ENCODE measurements at regions of chr3 and their contacts with region 1.

Region 1: GRCh38 chr3:908839-909238 is 184.0 kb upstream of the CNTN6 start:
- DNase-seq: no peak
- H3K4me3 ChIP-seq: no peak overlapping the region
- H3K27ac ChIP-seq: no peak overlapping the region
- H3K4me1 ChIP-seq: no peaks in the 10 kb centered on the region
- H3K27me3 ChIP-seq: no peaks in the 10 kb centered on the region
- CTCF ChIP-seq: peak; percentile 16 to 47

Region 2: GRCh38 chr3:952906-953305 is 44.1 kb after region 1 on chr3:
- CTCF ChIA-PET with region 1: no interaction called
- dilution Hi-C with region 1: no loop called
- in situ Hi-C with region 1: no loop called
- intact Hi-C with region 1: no loop called
- DNase-seq: no peak
- H3K4me3 ChIP-seq: no peak overlapping the region
- H3K27ac ChIP-seq: no peak overlapping the region
- H3K4me1 ChIP-seq: no peaks in the 10 kb centered on the region
- H3K27me3 ChIP-seq: no peaks in the 10 kb centered on the region
- CTCF ChIP-seq: no peak

Region 3: GRCh38 chr3:976021-976420 is 67.2 kb after region 1 on chr3:
- CTCF ChIA-PET with region 1: no interaction called
- dilution Hi-C with region 1: no loop called
- in situ Hi-C with region 1: no loop called
- intact Hi-C with region 1: loop called (anchors 2 kb)
- DNase-seq: peak; percentile 12
- H3K4me3 ChIP-seq: no peak overlapping the region
- H3K27ac ChIP-seq: no peak overlapping the region
- H3K4me1 ChIP-seq: no peaks in the 10 kb centered on the region
- H3K27me3 ChIP-seq: peaks cover 2% of the 10 kb centered on the region
- CTCF ChIP-seq: no peak

Region 4: DNA sequence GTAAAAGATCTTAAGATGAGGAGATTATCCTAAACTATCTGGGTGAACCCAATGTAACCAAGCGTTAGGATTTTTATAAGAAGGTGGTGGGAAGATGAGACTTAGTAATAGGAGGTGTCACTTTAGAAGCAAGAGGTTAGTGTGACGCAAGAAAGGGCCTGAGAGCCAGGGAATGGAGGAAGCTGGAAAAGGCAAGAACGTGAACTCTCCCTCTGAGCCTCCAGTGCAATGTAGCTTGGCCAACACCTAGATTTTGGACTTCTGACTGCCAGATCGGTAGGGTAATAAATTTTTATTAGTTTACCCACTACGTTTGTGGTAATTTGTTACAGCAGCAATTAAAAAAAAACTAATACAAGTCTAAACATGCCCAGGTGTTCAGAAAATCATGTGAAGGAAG is 163.2 kb after region 1 on chr3:
- CTCF ChIA-PET with region 1: interaction called, 14 read pairs
- dilution Hi-C with region 1: no loop called
- in situ Hi-C with region 1: no loop called
- intact Hi-C with region 1: no loop called
- DNase-seq: no peak
- H3K4me3 ChIP-seq: no peak overlapping the region
- H3K27ac ChIP-seq: no peak overlapping the region
- H3K4me1 ChIP-seq: no peaks in the 10 kb centered on the region
- H3K27me3 ChIP-seq: no peaks in the 10 kb centered on the region
- CTCF ChIP-seq: no peak

Region 5: DNA sequence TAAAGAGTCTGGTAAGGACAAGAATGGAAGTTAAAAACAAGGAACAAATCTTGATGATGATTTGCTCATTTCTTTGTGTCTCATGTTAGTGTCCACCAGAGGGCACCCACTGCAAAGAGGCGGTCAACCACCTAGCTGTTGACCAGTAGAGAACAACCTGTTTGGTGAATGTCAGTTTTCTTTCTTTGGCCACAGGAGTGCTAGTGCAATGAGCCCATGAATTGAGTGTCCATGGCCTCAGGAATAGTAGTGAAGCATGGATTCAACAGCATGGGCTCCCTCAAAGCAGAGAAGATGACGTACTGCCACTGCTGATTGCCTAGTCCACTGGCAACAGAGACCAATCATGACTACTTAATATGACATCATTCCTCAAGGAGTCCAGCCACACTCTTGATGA is 173.3 kb after region 1 on chr3:
- CTCF ChIA-PET with region 1: no interaction called
- dilution Hi-C with region 1: no loop called
- in situ Hi-C with region 1: no loop called
- intact Hi-C with region 1: loop called (anchors 1 kb)
- DNase-seq: peak; percentile 27
- H3K4me3 ChIP-seq: no peak overlapping the region
- H3K27ac ChIP-seq: no peak overlapping the region
- H3K4me1 ChIP-seq: no peaks in the 10 kb centered on the region
- H3K27me3 ChIP-seq: no peaks in the 10 kb centered on the region
- CTCF ChIP-seq: peak; percentile 67 to 80

Region 6: GRCh38 chr3:1251282-1252060 is 342.6 kb after region 1 on chr3:
- CTCF ChIA-PET with region 1: no interaction called
- dilution Hi-C with region 1: no loop called
- in situ Hi-C with region 1: no loop called
- intact Hi-C with region 1: loop called (anchors 2 kb)
- DNase-seq: no peak
- H3K4me3 ChIP-seq: no peak overlapping the region
- H3K27ac ChIP-seq: no peak overlapping the region
- H3K4me1 ChIP-seq: no peaks in the 10 kb centered on the region
- H3K27me3 ChIP-seq: no peaks in the 10 kb centered on the region
- CTCF ChIP-seq: peak in 1 of 2 donors; percentile 13

Measured in mammary epithelial cell (primary cell).